Transverse colon (tissue), 4 donors: ENCODE measurements at regions of chr6 and their contacts with region 1.

Region 1: DNA sequence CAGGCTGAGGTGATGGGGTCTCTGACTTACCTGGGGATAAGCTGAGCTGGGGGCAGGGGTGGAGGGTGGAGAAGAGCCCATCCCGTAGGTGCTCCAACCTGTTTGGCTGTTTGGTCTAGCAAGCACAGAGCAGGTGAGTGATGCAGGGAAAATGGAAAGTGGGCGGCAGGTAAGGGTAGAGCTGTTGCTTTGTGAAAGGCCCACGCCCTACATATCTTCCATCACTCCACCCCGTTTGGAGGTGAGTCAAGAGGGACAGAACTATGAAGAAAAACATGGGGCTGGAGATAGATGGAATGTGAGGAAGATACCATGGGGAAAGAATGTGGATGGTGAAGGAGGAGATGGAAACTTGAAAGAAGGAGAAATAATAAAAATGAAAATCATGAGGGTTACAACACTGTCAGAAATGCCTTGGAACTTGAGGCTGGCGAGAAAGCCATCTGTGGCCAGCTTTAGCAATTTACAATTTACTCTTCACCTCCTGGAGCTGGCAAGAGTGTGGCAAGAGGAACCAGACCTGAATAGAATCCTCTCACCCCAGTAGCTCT is 1.3 kb downstream of the LY6G6C start:
- DNase-seq: no peak
- H3K4me3 ChIP-seq: no peak overlapping the region
- H3K27ac ChIP-seq: no peak overlapping the region
- H3K4me1 ChIP-seq: peaks cover 0 to 18% (median 17%) of the 10 kb centered on the region in 4 donors
- H3K27me3 ChIP-seq: no peaks in the 10 kb centered on the region
- CTCF ChIP-seq: no peak
- EP300 ChIP-seq: no peak
- POLR2A ChIP-seq: no peak

Region 2: DNA sequence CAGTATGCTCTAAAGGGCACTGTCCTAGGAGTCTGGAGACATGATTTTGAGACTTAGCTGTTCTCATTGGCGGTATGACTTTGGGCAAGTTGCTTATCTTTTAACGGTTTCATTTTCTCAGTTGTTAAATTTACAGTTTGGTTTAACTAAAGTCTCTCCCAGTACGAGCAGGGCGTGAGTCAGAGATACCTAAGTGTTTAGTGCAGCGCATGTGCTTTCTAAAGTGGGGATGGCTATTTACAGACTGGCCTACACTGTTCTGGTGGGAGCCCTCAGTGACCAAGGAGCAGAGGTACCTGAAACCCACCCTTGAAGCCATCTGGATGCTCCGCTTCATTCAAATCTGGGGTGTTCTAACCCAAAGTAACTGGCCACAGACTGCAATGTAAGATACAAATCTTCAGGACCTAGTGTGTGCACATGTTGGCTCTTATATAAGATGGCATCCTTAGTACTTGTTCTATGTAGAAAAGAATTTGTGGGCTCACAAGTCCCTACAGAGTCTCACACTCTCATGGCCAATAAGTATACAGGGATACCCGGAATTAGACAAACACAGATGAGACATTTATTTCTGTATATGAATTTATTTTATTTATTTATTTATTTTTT is 30.2 kb after region 1 on chr6:
- in situ Hi-C with region 1: no loop called
- intact Hi-C with region 1: loop called (anchors 1 kb)
- DNase-seq: no peak
- H3K4me3 ChIP-seq: no peak overlapping the region
- H3K27ac ChIP-seq: no peak overlapping the region
- H3K4me1 ChIP-seq: peaks cover 0 to 5% (median 0%) of the 10 kb centered on the region in 4 donors
- H3K27me3 ChIP-seq: no peaks in the 10 kb centered on the region
- CTCF ChIP-seq: no peak
- EP300 ChIP-seq: no peak
- POLR2A ChIP-seq: no peak

Region 3: DNA sequence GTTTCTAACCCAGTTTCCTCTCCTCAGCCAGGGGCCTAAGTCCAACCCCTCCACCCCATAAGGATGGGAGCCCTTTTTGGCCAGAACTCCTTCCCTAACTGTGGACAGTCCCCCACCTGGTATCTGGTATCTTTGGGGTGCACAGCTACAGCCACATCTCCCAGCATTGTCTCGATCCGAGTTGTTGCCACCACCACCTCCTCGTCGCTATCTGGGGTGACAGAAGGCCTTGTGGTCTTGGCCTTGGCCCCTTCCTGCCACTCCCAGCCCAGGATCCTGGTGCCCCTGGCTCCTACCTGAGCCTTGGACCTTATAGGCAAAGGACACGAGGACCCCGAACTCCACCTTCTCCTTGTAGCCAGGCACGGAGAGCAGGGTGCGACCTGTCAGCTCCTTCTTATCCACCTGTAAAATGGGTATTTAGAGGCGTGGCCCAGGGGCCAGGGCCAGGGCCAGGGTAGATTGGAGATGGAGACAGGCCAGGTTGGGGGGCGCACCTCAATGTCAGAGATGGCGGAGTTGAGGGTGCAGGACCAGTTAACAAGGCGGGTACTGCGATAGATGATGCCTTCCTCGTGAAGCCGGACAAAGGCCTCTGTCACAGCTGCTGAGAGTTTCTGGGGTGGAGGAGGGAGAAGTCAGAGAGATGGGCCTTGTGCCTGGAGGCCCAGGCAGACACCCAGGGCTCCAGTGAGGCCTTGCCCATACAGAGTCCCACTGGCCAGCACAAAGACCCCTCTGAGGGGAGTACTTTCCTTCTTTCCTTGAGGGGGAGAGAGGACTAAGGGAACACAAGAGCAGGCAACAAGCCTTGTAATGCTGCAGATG is 64.0 kb after region 1 on chr6:
- in situ Hi-C with region 1: no loop called
- intact Hi-C with region 1: no loop called
- DNase-seq: no peak
- H3K4me3 ChIP-seq: no peak overlapping the region
- H3K27ac ChIP-seq: no peak overlapping the region
- H3K4me1 ChIP-seq: no peaks in the 10 kb centered on the region
- H3K27me3 ChIP-seq: no peaks in the 10 kb centered on the region
- CTCF ChIP-seq: no peak
- EP300 ChIP-seq: no peak
- POLR2A ChIP-seq: no peak